ENCODE measurements at regions of chr2 and their contacts with region 1.

Region 1: DNA sequence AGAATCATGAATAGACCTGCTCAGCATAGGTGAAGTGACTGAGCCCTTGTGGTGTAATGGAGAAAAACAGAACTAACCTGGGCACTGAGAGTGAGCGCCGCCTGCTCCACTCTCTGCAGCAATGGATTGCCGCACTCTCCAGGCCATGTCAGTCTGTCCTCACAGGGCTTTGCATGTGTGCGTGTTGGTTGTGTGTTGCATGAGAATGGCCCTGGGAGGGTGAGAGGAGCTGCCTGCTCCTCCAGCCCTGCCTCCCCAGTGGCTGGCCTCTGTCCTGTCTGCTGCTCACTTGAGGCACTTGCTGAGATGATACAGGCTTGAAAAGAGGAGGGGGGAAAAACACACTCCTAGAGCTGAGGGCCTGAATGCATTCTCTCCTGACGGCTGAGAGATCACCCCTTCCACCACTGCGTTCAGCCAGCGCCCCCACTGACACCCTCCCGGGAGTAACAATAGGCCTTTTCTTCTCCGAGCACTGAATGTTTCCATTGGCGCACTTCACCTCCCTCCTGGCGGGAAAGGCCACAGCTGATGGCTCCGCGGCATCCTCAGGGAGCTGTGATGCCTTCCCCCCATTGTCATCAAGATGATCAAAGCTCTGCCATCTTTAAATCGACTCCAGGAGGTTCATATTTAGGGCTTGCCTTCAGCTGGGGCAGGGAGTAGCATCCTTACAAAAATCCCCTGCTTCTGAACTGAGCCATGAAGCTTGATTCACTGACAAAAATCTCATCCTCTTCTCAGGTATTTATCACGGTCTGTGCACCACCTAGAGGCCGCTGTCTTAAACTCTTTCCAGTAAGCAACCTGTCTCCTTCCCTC is 49.9 kb upstream of the DAPL1 start:
- DNase-seq: peak in 1 of 2 donors; percentile 87
- H3K4me3 ChIP-seq: no peak overlapping the region
- H3K27ac ChIP-seq: peak overlapping the region in 1 of 5 donors; percentile 14
- H3K4me1 ChIP-seq: no peaks in the 10 kb centered on the region
- H3K27me3 ChIP-seq: peaks cover 0 to 39% (median 0%) of the 10 kb centered on the region in 3 donors
- CTCF ChIP-seq: peak in 4 of 7 experiments; percentile 10 to 54 (median 24)
- EP300 ChIP-seq: no peak
- POLR2A ChIP-seq: no peak

Region 2: GRCh38 chr2:157876066-157876787 is 869.0 kb before region 1 on chr2 and contains the start of gene ACVR1:
- intact Hi-C with region 1: no loop called
- DNase-seq: peak; percentile 96 to 98
- H3K4me3 ChIP-seq: peak within 1 kb of the TSS; percentile 68 to 87 (median 78)
- H3K27ac ChIP-seq: peak within 1 kb of the TSS; percentile 97 to 100 (median 98)
- H3K4me1 ChIP-seq: peaks cover 26 to 63% (median 45%) of the 10 kb centered on the region in 4 donors
- H3K27me3 ChIP-seq: no peaks in the 10 kb centered on the region
- CTCF ChIP-seq: peak in 1 of 7 experiments; percentile 67
- EP300 ChIP-seq: no peak
- POLR2A ChIP-seq: peak in 1 of 4 donors; percentile 15
- total RNA-seq, gene ACVR1: 2.3 to 32.1 (median 18.4) TPM

Region 3: DNA sequence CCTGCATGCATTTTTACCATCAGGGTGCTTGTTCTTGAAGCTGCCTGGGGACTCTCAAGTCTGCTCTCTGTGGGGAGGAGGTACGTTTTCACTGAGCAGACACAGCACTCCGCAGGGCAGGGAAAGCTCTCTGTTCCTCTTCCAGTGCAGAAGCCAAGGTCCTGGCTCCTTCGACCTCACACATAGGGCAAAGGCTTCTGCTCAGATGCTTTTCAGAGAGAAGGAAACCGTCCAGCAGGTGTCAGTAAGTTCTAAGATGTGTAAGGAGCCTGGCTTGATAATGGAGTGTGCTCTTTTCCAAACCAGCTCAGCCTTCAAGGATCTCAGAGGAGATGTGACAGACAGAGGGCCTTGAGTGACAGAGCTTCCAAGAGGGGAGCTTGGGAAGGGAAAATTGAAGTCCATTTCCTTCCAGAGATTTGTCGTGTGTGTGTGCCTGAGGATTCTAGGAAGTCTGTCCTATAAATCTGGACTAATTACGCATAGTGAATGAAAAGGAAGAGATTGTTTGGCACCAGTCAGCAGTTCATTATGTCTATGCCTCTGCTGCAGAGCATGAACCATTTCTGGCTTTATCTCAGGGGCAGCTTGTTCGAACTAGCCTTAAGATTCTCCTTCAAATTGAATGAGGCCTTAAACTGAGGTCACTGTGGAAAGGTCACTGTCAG is 710.9 kb before region 1 on chr2:
- intact Hi-C with region 1: loop called (anchors 5 kb)
- DNase-seq: peak; percentile 59 to 89
- H3K4me3 ChIP-seq: no peak overlapping the region
- H3K27ac ChIP-seq: no peak overlapping the region
- H3K4me1 ChIP-seq: no peaks in the 10 kb centered on the region
- H3K27me3 ChIP-seq: no peaks in the 10 kb centered on the region
- CTCF ChIP-seq: peak in 5 of 7 experiments; percentile 8 to 54 (median 45)
- EP300 ChIP-seq: no peak
- POLR2A ChIP-seq: no peak

Region 4: DNA sequence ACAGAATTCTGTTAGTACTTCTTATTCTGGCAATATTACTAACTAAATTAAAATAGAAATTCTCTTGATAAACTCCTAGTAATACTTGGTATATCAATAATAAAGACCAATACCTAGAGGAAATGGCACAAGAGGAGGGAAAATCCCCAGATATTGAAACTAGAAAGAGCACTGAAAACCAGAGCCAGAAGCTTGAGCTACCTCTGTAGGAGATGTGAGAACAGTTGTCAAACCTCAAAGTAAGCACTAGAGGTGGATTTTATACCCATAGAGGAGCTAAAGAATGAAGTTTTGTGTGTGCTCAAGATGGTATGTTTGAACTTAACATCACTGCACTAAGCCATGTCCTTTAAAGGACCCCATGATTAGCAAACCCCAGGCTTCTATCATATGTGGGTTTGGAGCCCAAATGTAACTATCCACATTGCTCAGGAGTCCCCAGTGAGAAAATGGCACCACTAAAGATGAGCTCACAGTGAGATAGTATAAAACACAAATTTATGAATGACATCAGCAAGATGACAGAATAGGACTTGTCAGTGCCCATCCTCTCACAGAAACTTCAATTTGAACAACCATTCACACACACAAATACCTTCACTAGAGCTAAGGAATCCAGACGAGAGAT is 166.4 kb before region 1 on chr2:
- intact Hi-C with region 1: no loop called
- DNase-seq: no peak
- H3K4me3 ChIP-seq: no peak overlapping the region
- H3K27ac ChIP-seq: no peak overlapping the region
- H3K4me1 ChIP-seq: no peaks in the 10 kb centered on the region
- H3K27me3 ChIP-seq: no peaks in the 10 kb centered on the region
- CTCF ChIP-seq: no peak
- EP300 ChIP-seq: no peak
- POLR2A ChIP-seq: no peak

Measured in stomach (tissue), 19 donors.